Heart left ventricle (tissue), 16 donors: ENCODE measurements at regions of chr10 and their contacts with region 1.

Region 1: GRCh38 chr10:94155722-94156271 is 162.1 kb downstream of the PLCE1 start:
- DNase-seq: no peak
- ATAC-seq: peak; percentile 26 to 66 (median 38)
- H3K4me3 ChIP-seq: no peak overlapping the region
- H3K27ac ChIP-seq: peak overlapping the region in 5 of 12 donors; percentile 14 to 53 (median 49)
- H3K4me1 ChIP-seq: peaks cover 0 to 19% (median 4%) of the 10 kb centered on the region in 12 donors
- H3K27me3 ChIP-seq: no peaks in the 10 kb centered on the region
- CTCF ChIP-seq: no peak
- POLR2A ChIP-seq: no peak

Region 2: DNA sequence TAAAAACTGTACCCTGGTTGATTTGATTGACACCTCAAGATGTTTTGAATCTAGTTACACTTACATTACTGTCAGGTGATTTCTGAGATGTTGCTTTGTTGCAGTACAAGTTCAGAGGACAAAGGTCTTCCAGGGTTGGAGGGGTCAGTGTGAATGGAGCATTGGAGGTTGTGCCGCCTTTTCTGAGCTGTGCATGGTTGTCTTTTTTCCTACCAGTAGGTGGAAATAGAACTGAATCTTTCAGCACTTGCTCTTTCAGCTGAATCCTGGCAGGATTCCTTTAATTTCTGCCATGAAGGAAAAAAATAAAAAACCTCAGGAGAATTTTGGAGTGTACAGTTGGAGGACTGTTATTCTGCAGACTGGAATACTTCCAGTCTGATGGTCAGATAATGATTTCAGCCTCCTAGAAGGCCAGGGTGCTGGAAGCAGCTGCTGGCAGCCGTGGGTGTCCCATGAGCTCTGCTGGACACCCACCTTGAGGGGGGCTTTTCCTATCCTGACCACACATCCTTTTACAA is 79.4 kb before region 1 on chr10:
- intact Hi-C with region 1: no loop called
- DNase-seq: no peak
- ATAC-seq: peak; percentile 33 to 86 (median 82)
- H3K4me3 ChIP-seq: no peak overlapping the region
- H3K27ac ChIP-seq: peak overlapping the region in 6 of 12 donors; percentile 9 to 65 (median 36)
- H3K4me1 ChIP-seq: peaks cover 0 to 26% (median 19%) of the 10 kb centered on the region in 12 donors
- H3K27me3 ChIP-seq: no peaks in the 10 kb centered on the region
- CTCF ChIP-seq: peak; percentile 26 to 64 (median 48)
- POLR2A ChIP-seq: no peak

Region 3: GRCh38 chr10:94123258-94123995 is 32.4 kb before region 1 on chr10:
- intact Hi-C with region 1: loop called in 1 of 10 experiments (anchors 1 kb)
- DNase-seq: no peak
- ATAC-seq: peak in 3 of 4 donors; percentile 61 to 77 (median 67)
- H3K4me3 ChIP-seq: no peak overlapping the region
- H3K27ac ChIP-seq: peak overlapping the region in 6 of 12 donors; percentile 18 to 69 (median 58)
- H3K4me1 ChIP-seq: peaks cover 0 to 36% (median 14%) of the 10 kb centered on the region in 12 donors
- H3K27me3 ChIP-seq: no peaks in the 10 kb centered on the region
- CTCF ChIP-seq: no peak
- POLR2A ChIP-seq: no peak

Region 4: GRCh38 chr10:94264085-94264484 is 108.3 kb after region 1 on chr10:
- intact Hi-C with region 1: no loop called
- DNase-seq: no peak
- ATAC-seq: no peak
- H3K4me3 ChIP-seq: no peak overlapping the region
- H3K27ac ChIP-seq: no peak overlapping the region
- H3K4me1 ChIP-seq: peaks cover 0 to 18% (median 0%) of the 10 kb centered on the region in 12 donors
- H3K27me3 ChIP-seq: no peaks in the 10 kb centered on the region
- CTCF ChIP-seq: no peak
- POLR2A ChIP-seq: no peak